ENCODE measurements at regions of chr2 and their contacts with region 1.

Region 1: DNA sequence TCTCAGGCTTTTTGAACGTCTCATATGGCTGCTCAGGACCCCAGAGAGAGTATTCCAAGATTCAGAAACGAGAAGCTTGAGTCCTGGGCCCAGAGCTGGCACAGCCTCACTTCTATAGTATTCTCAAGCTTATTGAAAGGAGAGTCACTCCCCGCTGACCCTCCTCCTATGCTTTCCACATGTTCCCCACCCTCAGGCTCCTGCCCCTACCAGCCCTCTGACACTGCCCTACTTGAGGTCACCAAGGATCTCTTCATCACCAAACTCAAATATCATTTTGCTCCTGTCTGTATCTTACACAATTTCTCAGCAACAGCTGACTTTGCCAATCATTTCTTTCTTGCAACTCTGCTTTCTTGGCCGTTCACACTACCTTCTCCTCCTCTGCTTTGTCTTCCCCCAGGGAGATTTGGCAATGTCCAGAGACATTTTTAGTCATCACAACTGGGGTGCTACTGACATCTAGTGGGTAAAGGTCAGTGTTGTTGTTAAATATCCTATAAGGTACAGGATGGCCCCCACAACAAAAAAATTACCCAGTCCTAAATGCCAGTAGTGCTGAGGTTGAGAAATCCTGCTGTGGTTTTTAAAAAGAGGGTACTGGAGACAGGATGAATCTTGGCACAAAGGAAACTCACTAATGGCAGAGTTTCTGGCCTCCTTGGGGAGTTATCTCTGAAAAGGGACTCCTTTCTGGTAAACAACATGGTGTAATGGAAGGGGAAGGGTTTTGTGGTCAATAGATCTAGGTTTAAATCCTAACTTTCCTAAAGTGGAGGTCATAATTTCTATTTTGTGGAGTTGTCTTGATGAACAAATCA is 26.9 kb upstream of the INSIG2 start:
- DNase-seq: peak; percentile 12
- ATAC-seq: peak; percentile 42; the same call in 1 of the 2 replicates
- H3K4me3 ChIP-seq: no peak overlapping the region
- H3K27ac ChIP-seq: no peak overlapping the region
- H3K4me1 ChIP-seq: peaks cover 1% of the 10 kb centered on the region; the same call in 1 of the 2 replicates
- H3K27me3 ChIP-seq: peaks cover 29% of the 10 kb centered on the region
- CTCF ChIP-seq: peak; percentile 27
- POLR2A ChIP-seq: no peak
- RAD21 ChIP-seq: no peak

Region 2: DNA sequence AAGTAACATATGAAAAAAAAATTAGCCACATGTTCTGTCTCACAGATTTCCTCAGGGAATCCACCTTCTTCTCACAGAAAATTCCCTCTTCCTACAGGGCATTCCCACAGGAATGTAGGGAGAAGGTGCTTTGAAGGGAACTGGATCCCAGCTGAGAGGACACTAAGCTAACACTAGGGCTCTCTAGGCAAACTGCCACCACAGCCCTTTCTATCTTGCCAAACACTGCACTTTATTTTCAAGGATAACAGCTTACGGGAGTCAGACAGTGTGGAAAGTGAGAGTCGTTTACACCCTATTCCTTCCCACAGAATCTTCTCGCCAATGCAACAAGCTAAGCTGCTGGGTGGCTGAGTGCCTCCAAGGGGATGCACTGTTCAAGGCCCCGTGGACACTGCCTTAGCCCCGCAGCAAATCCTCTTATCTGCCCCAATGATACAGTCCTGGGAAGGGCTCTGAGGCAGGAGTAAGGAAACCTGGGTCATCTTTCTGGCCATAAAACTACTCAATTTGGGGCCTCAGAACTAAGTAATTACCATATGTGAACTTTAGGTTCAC is 124.4 kb before region 1 on chr2:
- CTCF ChIA-PET with region 1: no interaction called
- POLR2A ChIA-PET with region 1: no interaction called
- dilution Hi-C with region 1: no loop called
- in situ Hi-C with region 1: no loop called
- intact Hi-C with region 1: no loop called
- DNase-seq: no peak
- ATAC-seq: no peak
- H3K4me3 ChIP-seq: no peak overlapping the region
- H3K27ac ChIP-seq: no peak overlapping the region
- H3K4me1 ChIP-seq: peaks cover 5% of the 10 kb centered on the region; the same call in 1 of the 2 replicates
- H3K27me3 ChIP-seq: no peaks in the 10 kb centered on the region
- CTCF ChIP-seq: no peak
- POLR2A ChIP-seq: no peak
- RAD21 ChIP-seq: no peak

Region 3: GRCh38 chr2:118032169-118033013 is 29.0 kb before region 1 on chr2:
- CTCF ChIA-PET with region 1: interaction called, 4 read pairs
- POLR2A ChIA-PET with region 1: no interaction called
- dilution Hi-C with region 1: no loop called
- in situ Hi-C with region 1: no loop called
- intact Hi-C with region 1: loop called (anchors 1 kb)
- DNase-seq: peak; percentile 34
- ATAC-seq: peak; percentile 90
- H3K4me3 ChIP-seq: no peak overlapping the region
- H3K27ac ChIP-seq: no peak overlapping the region
- H3K4me1 ChIP-seq: no peaks in the 10 kb centered on the region
- H3K27me3 ChIP-seq: peaks cover 5% of the 10 kb centered on the region
- CTCF ChIP-seq: peak; percentile 69
- POLR2A ChIP-seq: no peak
- RAD21 ChIP-seq: peak; percentile 41

Region 4: DNA sequence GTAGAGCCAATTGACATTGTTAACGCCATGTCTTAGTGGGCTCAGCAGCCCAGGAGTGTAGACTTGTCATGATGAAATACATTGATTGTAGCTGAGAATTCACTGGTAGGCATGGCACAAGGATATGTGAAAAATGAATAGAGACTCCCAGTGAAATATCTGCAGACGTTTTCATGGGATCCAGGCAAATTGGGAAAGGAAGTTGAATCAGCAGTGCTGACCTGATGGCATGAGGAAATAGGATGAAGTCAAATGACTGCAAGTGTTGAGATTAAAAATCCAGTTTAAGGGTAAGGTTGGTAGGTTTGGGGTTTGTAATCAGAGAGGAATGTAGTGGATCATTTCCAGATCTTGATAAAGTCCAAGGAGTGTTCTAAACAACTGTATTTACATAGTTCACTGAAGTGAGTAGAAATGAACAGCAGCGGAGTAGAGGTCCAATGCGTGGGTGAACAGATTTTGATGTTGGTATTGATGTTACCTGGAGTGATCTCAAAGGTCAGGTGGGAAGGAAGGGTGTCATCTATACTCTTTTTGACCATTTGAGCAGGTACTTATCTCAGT is 51.5 kb after region 1 on chr2:
- CTCF ChIA-PET with region 1: no interaction called
- POLR2A ChIA-PET with region 1: no interaction called
- dilution Hi-C with region 1: no loop called
- in situ Hi-C with region 1: no loop called
- intact Hi-C with region 1: no loop called
- DNase-seq: peak; percentile 71
- ATAC-seq: peak; percentile 40
- H3K4me3 ChIP-seq: no peak overlapping the region
- H3K27ac ChIP-seq: no peak overlapping the region
- H3K4me1 ChIP-seq: 0 out of 2 replicates have a peak, but pooled peaks cover 2% of the 10 kb centered on the region
- H3K27me3 ChIP-seq: no peaks in the 10 kb centered on the region
- CTCF ChIP-seq: no peak
- POLR2A ChIP-seq: no peak
- RAD21 ChIP-seq: no peak